ENCODE measurements at regions of chr7 and their contacts with region 1.

Region 1: GRCh38 chr7:70193514-70193913 is 595.2 kb downstream of the AUTS2 start:
- DNase-seq: no peak
- H3K4me3 ChIP-seq: no peak overlapping the region
- H3K27ac ChIP-seq: no peak overlapping the region
- H3K4me1 ChIP-seq: no peaks in the 10 kb centered on the region
- H3K27me3 ChIP-seq: no peaks in the 10 kb centered on the region
- CTCF ChIP-seq: peak; percentile 26 to 33

Region 2: GRCh38 chr7:70698219-70698832 is 504.8 kb after region 1 on chr7:
- intact Hi-C with region 1: loop called (anchors 5 kb)
- DNase-seq: no peak
- H3K4me3 ChIP-seq: no peak overlapping the region
- H3K27ac ChIP-seq: no peak overlapping the region
- H3K4me1 ChIP-seq: peaks cover 0 to 20% (median 11%) of the 10 kb centered on the region in 4 donors
- H3K27me3 ChIP-seq: no peaks in the 10 kb centered on the region
- CTCF ChIP-seq: peak; percentile 77 to 87

Measured in tibial artery (tissue), 4 donors.